ENCODE measurements at regions of chr4 and their contacts with region 1.

Region 1: GRCh38 chr4:152021788-152022438 is 261.1 kb upstream of the GATB start:
- DNase-seq: peak; percentile 52 to 99 (median 94)
- H3K4me3 ChIP-seq: peak overlapping the region in 7 of 59 donors; percentile 6 to 28 (median 9)
- H3K27ac ChIP-seq: peak overlapping the region in 57 of 59 donors; percentile 22 to 86 (median 74)
- H3K27me3 ChIP-seq: no peaks in the 10 kb centered on the region
- CTCF ChIP-seq: peak in 12 of 56 donors; percentile 6 to 43 (median 22)

Region 2: DNA sequence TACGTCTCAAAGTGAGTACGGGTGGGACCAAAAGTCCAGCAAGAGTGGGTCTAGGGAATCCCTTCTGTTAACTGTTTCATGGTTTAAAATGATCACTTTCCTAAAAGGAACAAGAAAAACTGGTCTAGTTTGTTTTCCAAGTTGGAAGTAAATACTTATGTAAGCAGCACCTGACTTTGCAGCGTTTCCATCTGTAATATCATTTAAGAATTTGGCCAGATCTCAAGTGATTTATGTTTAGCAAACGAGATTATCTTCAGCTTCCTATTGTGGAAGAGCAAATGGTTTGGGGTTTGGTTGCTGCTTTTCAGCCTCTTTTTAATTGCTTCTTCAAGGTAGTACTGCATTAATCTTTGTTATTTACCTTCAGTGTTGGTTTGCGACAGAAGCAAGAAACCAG is 562.5 kb before region 1 on chr4:
- intact Hi-C with region 1: no loop called
- DNase-seq: no peak
- H3K4me3 ChIP-seq: no peak overlapping the region
- H3K27ac ChIP-seq: no peak overlapping the region
- H3K27me3 ChIP-seq: peaks cover 0 to 3% (median 0%) of the 10 kb centered on the region in 45 donors
- CTCF ChIP-seq: no peak

Region 3: GRCh38 chr4:151718984-151719955 is 302.6 kb before region 1 on chr4:
- intact Hi-C with region 1: loop called in 1 of 2 experiments (anchors 5 kb)
- DNase-seq: peak in 4 of 10 donors; percentile 49 to 71 (median 58)
- H3K4me3 ChIP-seq: peak overlapping the region in 2 of 59 donors; percentile 3 to 20
- H3K27ac ChIP-seq: peak overlapping the region in 55 of 59 donors; percentile 5 to 93 (median 82)
- H3K27me3 ChIP-seq: no peaks in the 10 kb centered on the region
- CTCF ChIP-seq: no peak

Region 4: GRCh38 chr4:151760712-151761527 is 261.0 kb before region 1 on chr4 and contains the start of gene GATB:
- intact Hi-C with region 1: loop called in 1 of 2 experiments (anchors 5 kb)
- DNase-seq: peak; percentile 91 to 99 (median 96)
- H3K4me3 ChIP-seq: peak within 1 kb of the TSS; percentile 61 to 98 (median 85)
- H3K27ac ChIP-seq: peak within 1 kb of the TSS in 57 of 59 donors; percentile 7 to 93 (median 81)
- H3K27me3 ChIP-seq: peaks cover 0 to 4% (median 0%) of the 10 kb centered on the region in 45 donors
- CTCF ChIP-seq: peak in 55 of 56 donors; percentile 32 to 82 (median 69)
- total RNA-seq, gene GATB: 36.7 to 100 (median 63.1) TPM

Region 5: DNA sequence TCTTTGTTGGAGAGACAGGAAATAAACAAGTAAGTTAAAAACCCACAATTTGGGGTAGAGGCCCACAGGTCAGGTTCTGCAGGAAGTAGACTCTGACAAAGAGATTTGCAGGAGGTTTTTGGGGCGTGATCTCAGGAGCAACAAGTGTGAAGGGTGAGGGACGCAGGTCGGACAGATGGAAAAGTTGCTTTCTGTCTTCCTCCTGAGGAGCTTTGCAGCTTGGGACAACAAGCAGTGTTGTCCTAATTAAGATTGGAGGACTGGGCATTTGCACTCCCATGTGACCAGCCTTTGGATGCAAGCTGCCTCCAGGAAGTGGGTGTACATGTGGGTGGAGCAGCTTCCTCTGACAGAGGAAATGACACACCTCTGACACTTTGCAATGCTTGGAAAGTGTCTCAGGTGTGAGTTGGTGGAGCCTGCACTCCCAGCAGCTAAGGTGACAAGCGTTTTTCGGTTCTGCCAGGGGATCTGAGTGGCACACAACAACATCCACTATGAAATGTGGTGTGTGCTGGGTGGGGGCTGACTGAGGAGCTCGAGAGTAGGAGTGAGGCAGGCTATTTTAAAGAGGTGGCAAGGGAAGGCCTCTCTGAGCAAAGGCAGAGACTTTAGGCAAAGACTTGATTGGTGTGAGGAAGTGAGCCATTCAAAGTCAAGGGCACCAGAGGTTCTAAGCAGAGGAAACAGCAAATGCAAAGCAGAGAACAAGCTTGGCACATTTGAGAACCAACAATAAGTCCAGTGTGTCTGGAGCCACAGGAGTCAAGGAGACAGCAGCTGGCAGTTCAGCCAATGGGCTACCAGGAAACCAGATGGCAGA is 78.7 kb after region 1 on chr4:
- intact Hi-C with region 1: loop called (anchors 5 kb)
- DNase-seq: no peak
- H3K4me3 ChIP-seq: no peak overlapping the region
- H3K27ac ChIP-seq: peak overlapping the region in 56 of 59 donors; percentile 17 to 95 (median 80)
- H3K27me3 ChIP-seq: peaks cover 0 to 4% (median 0%) of the 10 kb centered on the region in 45 donors
- CTCF ChIP-seq: no peak

Region 6: GRCh38 chr4:152156442-152156841 is 134.5 kb after region 1 on chr4:
- intact Hi-C with region 1: loop called in 1 of 2 experiments (anchors 5 kb)
- DNase-seq: peak in 3 of 10 donors; percentile 14 to 40 (median 17)
- H3K4me3 ChIP-seq: no peak overlapping the region
- H3K27ac ChIP-seq: peak overlapping the region in 2 of 59 donors; percentile 42 to 44
- H3K27me3 ChIP-seq: no peaks in the 10 kb centered on the region
- CTCF ChIP-seq: no peak

Measured in dorsolateral prefrontal cortex (tissue), 120 donors.